ENCODE measurements at regions of chr18 and their contacts with region 1.

Region 1: DNA sequence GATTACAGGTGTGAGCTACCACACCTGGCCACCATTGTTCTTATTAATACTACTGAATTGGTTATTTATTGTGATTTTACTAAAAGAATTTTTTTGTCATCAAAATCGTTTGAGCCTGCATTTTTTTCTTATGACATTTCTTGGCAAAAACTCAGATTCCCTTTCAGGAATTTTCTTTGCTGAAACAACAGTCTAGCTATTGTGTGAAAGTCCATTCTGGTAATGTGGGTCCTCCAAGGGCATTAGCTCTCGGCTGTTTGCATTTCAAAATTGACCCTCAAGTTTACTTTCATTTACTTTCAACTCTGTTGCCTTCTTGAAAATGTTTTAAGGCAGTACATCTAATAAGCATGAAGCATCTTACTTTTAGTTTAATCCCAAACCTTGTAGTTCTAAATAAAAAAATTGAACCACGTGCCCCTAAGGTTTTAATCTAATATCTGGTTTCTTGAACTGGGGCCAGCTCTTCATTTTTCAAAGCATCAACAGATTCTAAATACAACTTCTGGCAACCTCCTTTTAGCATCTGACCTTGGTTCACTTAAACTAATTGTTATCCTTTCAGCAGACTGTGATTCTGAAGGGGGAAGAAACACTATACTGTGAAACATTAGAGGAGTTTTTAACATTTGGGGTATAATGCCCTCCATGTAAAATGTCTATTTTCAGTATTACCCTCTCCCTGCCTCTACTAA is 325.2 kb upstream of the RAB12 start:
- DNase-seq: no peak
- H3K4me3 ChIP-seq: no peak overlapping the region
- H3K27ac ChIP-seq: no peak overlapping the region
- H3K4me1 ChIP-seq: no peaks in the 10 kb centered on the region
- H3K27me3 ChIP-seq: no peaks in the 10 kb centered on the region
- CTCF ChIP-seq: no peak
- EP300 ChIP-seq: no peak
- POLR2A ChIP-seq: no peak

Region 2: DNA sequence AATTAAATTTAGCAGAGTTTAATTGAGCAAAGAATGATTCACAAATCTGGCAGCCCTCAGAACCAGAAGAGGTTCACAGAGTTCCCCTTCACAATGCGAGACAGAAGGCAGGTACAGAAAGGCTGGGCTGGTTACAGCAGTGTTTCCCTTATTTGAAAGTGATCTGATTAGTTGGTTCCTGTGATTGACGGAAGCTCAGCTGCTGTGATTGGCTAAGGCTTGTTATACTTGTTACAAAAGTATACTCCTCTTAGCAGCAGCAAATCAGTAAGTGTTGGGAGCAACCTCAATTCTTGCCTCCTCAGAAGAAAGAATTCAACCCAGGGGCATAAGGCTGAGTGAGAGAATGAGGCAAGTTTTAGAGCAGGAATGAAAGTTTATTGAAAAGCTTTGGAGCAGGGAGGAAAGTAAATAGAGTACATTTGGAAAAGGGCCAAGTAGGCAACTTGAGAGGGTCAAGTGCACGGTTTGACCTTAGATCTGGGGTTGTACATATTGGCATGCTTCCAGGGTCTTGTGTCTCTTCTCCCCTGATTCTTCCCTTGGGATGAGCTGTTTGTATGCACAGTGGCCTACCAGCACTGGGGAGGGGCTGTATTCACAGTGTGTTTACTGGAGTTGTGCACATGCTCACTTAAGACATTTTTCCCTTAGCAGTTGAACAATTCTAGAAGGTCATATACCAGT is 106.6 kb before region 1 on chr18:
- in situ Hi-C with region 1: loop called in 1 of 4 experiments (anchors 25 kb)
- intact Hi-C with region 1: no loop called
- DNase-seq: no peak
- H3K4me3 ChIP-seq: no peak overlapping the region
- H3K27ac ChIP-seq: peak overlapping the region in 1 of 4 donors; percentile 47
- H3K4me1 ChIP-seq: peaks cover 0 to 22% (median 2%) of the 10 kb centered on the region in 4 donors
- H3K27me3 ChIP-seq: no peaks in the 10 kb centered on the region
- CTCF ChIP-seq: no peak
- EP300 ChIP-seq: no peak
- POLR2A ChIP-seq: no peak

Region 3: GRCh38 chr18:8264861-8265411 is 19.1 kb before region 1 on chr18:
- in situ Hi-C with region 1: no loop called
- intact Hi-C with region 1: no loop called
- DNase-seq: no peak
- H3K4me3 ChIP-seq: no peak overlapping the region
- H3K27ac ChIP-seq: no peak overlapping the region
- H3K4me1 ChIP-seq: no peaks in the 10 kb centered on the region
- H3K27me3 ChIP-seq: no peaks in the 10 kb centered on the region
- CTCF ChIP-seq: no peak
- EP300 ChIP-seq: no peak
- POLR2A ChIP-seq: no peak